Calu3 (cell line): ENCODE measurements at regions of chr4 and their contacts with region 1.

Region 1: GRCh38 chr4:141346144-141346543 is 125.4 kb downstream of the ZNF330 start:
- DNase-seq: no peak
- H3K4me3 Mint-ChIP-seq: no peak overlapping the region
- H3K27ac Mint-ChIP-seq: no peak overlapping the region
- H3K4me1 Mint-ChIP-seq: peaks cover 35% of the 10 kb centered on the region
- H3K27me3 Mint-ChIP-seq: no peaks in the 10 kb centered on the region
- CTCF ChIP-seq: peak; percentile 22

Region 2: GRCh38 chr4:141654098-141654497 is 308.0 kb after region 1 on chr4:
- CTCF ChIA-PET with region 1: interaction called, 5 read pairs
- intact Hi-C with region 1: loop called (anchors 10 kb)
- DNase-seq: peak; percentile 44
- H3K4me3 Mint-ChIP-seq: no peak overlapping the region
- H3K27ac Mint-ChIP-seq: no peak overlapping the region
- H3K4me1 Mint-ChIP-seq: peaks cover 11% of the 10 kb centered on the region
- H3K27me3 Mint-ChIP-seq: no peaks in the 10 kb centered on the region
- CTCF ChIP-seq: no peak

Region 3: GRCh38 chr4:141711014-141711610 is 365.0 kb after region 1 on chr4:
- CTCF ChIA-PET with region 1: interaction called, 5 read pairs
- intact Hi-C with region 1: loop called (anchors 5 kb)
- DNase-seq: peak; percentile 3
- H3K4me3 Mint-ChIP-seq: no peak overlapping the region
- H3K27ac Mint-ChIP-seq: no peak overlapping the region
- H3K4me1 Mint-ChIP-seq: peaks cover 29% of the 10 kb centered on the region
- H3K27me3 Mint-ChIP-seq: no peaks in the 10 kb centered on the region
- CTCF ChIP-seq: peak; percentile 43

Region 4: DNA sequence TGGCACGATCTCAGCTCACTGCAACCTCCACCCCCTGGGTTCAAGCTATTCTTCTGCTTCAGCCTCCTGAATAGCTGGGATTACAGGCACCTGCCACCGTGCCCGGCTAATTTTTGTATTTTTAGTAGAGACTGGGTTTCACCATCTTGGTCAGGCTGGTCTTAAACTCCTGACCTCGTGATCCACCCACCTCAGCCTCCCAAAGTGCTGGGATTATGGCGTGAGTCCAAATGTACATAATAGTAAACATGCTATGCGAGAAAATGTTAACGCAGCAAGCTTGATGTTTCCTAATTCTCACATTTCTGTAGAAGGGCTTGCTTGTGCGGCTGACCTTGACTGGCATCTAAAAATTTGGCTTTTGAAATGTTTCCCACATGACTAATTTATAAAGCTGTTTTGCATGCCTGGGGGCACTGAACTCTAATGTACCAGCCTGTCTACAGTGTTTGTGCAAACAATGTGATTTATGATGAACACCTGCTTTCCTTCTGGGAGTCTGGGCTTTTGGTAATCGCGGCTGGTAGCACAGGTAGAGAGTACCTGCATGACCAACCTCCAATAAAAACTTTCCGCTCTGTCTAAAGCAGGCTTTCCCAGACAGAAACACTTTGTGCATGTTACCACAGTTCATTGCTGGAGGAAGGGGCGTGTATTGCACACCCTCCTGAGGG is 507.1 kb after region 1 on chr4:
- CTCF ChIA-PET with region 1: interaction called, 3 read pairs
- intact Hi-C with region 1: loop called (anchors 5 kb)
- DNase-seq: peak; percentile 62
- H3K4me3 Mint-ChIP-seq: peak overlapping the region; percentile 33
- H3K27ac Mint-ChIP-seq: peak overlapping the region; percentile 63
- H3K4me1 Mint-ChIP-seq: peaks cover 46% of the 10 kb centered on the region
- H3K27me3 Mint-ChIP-seq: no peaks in the 10 kb centered on the region
- CTCF ChIP-seq: no peak

Region 5: GRCh38 chr4:142095886-142096605 is 749.9 kb after region 1 on chr4:
- CTCF ChIA-PET with region 1: no interaction called
- intact Hi-C with region 1: loop called (anchors 5 kb)
- DNase-seq: peak; percentile 55
- H3K4me3 Mint-ChIP-seq: peak overlapping the region; percentile 18
- H3K27ac Mint-ChIP-seq: peak overlapping the region; percentile 82
- H3K4me1 Mint-ChIP-seq: peaks cover 36% of the 10 kb centered on the region
- H3K27me3 Mint-ChIP-seq: no peaks in the 10 kb centered on the region
- CTCF ChIP-seq: no peak